CD4-positive, alpha-beta memory T cell (primary cell): ENCODE measurements at regions of chr17 and their contacts with region 1.

Region 1: GRCh38 chr17:30336369-30337171 is 2.7 kb upstream of the TMIGD1 start:
- DNase-seq: peak; percentile 56 to 79 (median 76)
- H3K4me3 ChIP-seq: no peak overlapping the region
- H3K4me3 Mint-ChIP-seq: peak overlapping the region in 2 of 8 donors; percentile 64 to 68
- H3K27ac ChIP-seq: no peak overlapping the region
- H3K27ac Mint-ChIP-seq: peak overlapping the region in 4 of 7 donors; percentile 5 to 80 (median 58)
- H3K4me1 ChIP-seq: peaks cover 24% of the 10 kb centered on the region
- H3K4me1 Mint-ChIP-seq: peaks cover 30 to 47% (median 38%) of the 10 kb centered on the region in 4 donors
- H3K27me3 ChIP-seq: no peaks in the 10 kb centered on the region
- H3K27me3 Mint-ChIP-seq: no peaks in the 10 kb centered on the region

Region 2: GRCh38 chr17:30124273-30124796 is 212.2 kb before region 1 on chr17:
- CTCF ChIA-PET with region 1: interaction called, 107 read pairs
- POLR2A ChIA-PET with region 1: interaction called, 11 read pairs
- intact Hi-C with region 1: loop called (anchors 1 kb)
- DNase-seq: no peak
- H3K4me3 ChIP-seq: no peak overlapping the region
- H3K4me3 Mint-ChIP-seq: no peak overlapping the region
- H3K27ac ChIP-seq: no peak overlapping the region
- H3K27ac Mint-ChIP-seq: peak overlapping the region in 3 of 7 donors; percentile 10 to 83 (median 53)
- H3K4me1 ChIP-seq: peaks cover 20% of the 10 kb centered on the region
- H3K4me1 Mint-ChIP-seq: peaks cover 24 to 47% (median 34%) of the 10 kb centered on the region in 4 donors
- H3K27me3 ChIP-seq: no peaks in the 10 kb centered on the region
- H3K27me3 Mint-ChIP-seq: no peaks in the 10 kb centered on the region

Region 3: DNA sequence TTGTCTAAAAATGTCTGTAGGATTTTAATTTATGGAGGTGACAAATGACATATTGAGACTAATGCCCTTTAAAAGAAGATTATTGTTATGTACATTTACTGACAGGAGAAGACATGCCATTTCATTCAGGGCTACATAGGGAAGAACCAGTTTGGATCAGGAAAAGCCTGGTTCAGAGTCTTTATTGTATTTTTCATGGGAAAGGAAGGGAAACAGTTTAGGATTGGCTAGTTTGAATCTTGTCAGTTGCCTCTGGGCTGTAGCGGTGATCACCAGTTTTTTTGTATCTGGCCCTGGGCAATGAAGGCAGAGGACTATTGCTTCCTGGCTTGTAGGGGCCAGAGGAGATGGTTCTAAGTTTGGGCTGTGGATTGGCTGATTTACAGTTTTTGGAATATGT is 188.2 kb before region 1 on chr17:
- CTCF ChIA-PET with region 1: no interaction called
- POLR2A ChIA-PET with region 1: no interaction called
- intact Hi-C with region 1: no loop called
- DNase-seq: no peak
- H3K4me3 ChIP-seq: no peak overlapping the region
- H3K4me3 Mint-ChIP-seq: no peak overlapping the region
- H3K27ac ChIP-seq: no peak overlapping the region
- H3K27ac Mint-ChIP-seq: peak overlapping the region in 5 of 7 donors; percentile 3 to 67 (median 37)
- H3K4me1 ChIP-seq: no peaks in the 10 kb centered on the region
- H3K4me1 Mint-ChIP-seq: peaks cover 7 to 20% (median 18%) of the 10 kb centered on the region in 4 donors
- H3K27me3 ChIP-seq: no peaks in the 10 kb centered on the region
- H3K27me3 Mint-ChIP-seq: no peaks in the 10 kb centered on the region

Region 4: DNA sequence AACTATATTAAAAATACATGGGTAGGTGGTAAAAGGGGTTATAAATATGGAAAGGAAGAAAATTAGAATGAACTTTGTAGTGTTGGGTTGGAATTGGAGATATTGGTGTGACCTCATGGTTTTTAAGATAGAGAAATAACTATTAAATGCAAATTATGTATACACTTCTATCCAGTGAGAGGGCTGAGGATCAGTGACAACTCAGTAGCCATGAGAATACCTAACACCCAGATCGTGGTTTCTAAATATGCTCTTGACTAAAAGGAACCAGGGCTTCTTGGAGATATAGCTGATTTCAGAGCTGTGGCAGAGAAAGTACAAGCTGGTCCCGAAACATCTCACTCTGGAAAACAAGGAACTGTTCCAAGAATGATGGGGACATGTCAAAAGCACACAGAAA is 145.5 kb before region 1 on chr17:
- CTCF ChIA-PET with region 1: no interaction called
- POLR2A ChIA-PET with region 1: no interaction called
- intact Hi-C with region 1: no loop called
- DNase-seq: no peak
- H3K4me3 ChIP-seq: no peak overlapping the region
- H3K4me3 Mint-ChIP-seq: no peak overlapping the region
- H3K27ac ChIP-seq: no peak overlapping the region
- H3K27ac Mint-ChIP-seq: peak overlapping the region in 1 of 7 donors; percentile 36
- H3K4me1 ChIP-seq: no peaks in the 10 kb centered on the region
- H3K4me1 Mint-ChIP-seq: peaks cover 0 to 2% (median 0%) of the 10 kb centered on the region in 4 donors
- H3K27me3 ChIP-seq: no peaks in the 10 kb centered on the region
- H3K27me3 Mint-ChIP-seq: no peaks in the 10 kb centered on the region

Region 5: DNA sequence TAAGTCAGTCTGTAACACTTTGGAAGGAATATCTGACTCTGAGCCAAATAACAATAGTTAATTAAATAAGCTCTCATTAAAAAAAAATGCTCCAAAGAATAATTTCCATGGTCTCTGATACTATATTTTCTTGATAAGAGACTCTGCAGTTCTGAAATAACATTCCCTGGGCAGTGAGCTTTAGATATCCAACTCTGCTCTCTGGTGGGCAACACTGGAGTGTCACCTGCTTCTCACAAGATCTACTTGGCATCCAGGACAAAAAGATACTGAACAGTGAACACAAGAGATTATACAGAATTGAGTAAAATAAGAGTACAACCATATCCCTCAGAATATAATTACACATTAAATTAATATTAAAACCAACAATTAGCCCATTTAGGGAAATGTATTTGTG is 58.5 kb before region 1 on chr17:
- CTCF ChIA-PET with region 1: interaction called, 28 read pairs
- POLR2A ChIA-PET with region 1: no interaction called
- intact Hi-C with region 1: loop called (anchors 5 kb)
- DNase-seq: peak in 1 of 5 donors; percentile 2
- H3K4me3 ChIP-seq: no peak overlapping the region
- H3K4me3 Mint-ChIP-seq: no peak overlapping the region
- H3K27ac ChIP-seq: no peak overlapping the region
- H3K27ac Mint-ChIP-seq: no peak overlapping the region
- H3K4me1 ChIP-seq: no peaks in the 10 kb centered on the region
- H3K4me1 Mint-ChIP-seq: peaks cover 0 to 11% (median 1%) of the 10 kb centered on the region in 4 donors
- H3K27me3 ChIP-seq: no peaks in the 10 kb centered on the region
- H3K27me3 Mint-ChIP-seq: no peaks in the 10 kb centered on the region

Region 6: GRCh38 chr17:30299000-30299399 is 37.6 kb before region 1 on chr17:
- CTCF ChIA-PET with region 1: interaction called, 224 read pairs
- POLR2A ChIA-PET with region 1: interaction called, 12 read pairs
- intact Hi-C with region 1: loop called (anchors 1 kb)
- DNase-seq: peak in 1 of 5 donors; percentile 13
- H3K4me3 ChIP-seq: no peak overlapping the region
- H3K4me3 Mint-ChIP-seq: no peak overlapping the region
- H3K27ac ChIP-seq: no peak overlapping the region
- H3K27ac Mint-ChIP-seq: no peak overlapping the region
- H3K4me1 ChIP-seq: no peaks in the 10 kb centered on the region
- H3K4me1 Mint-ChIP-seq: peaks cover 1 to 9% (median 8%) of the 10 kb centered on the region in 4 donors
- H3K27me3 ChIP-seq: no peaks in the 10 kb centered on the region
- H3K27me3 Mint-ChIP-seq: no peaks in the 10 kb centered on the region

Region 7: DNA sequence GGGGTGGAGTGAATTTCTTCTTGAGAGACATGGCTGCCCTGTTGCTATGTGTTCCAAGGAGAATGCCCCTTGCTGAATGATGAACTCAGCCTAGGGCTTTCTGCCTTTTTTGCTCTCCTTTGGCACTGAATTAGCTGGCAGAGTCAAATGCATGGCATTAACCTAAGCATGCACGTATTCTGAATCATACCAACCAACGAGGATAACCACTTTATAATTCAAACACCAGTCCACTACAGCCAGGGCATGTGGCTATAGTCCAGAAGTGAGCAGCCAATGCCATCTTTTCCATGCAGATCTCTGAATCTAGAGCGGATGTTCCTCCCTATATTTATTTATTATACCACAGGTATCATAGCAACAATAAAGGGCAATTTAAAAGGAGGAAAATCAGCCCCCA is 18.4 kb before region 1 on chr17:
- CTCF ChIA-PET with region 1: interaction called, 103 read pairs
- POLR2A ChIA-PET with region 1: interaction called, 136 read pairs
- intact Hi-C with region 1: loop called (anchors 1 kb)
- DNase-seq: no peak
- H3K4me3 ChIP-seq: no peak overlapping the region
- H3K4me3 Mint-ChIP-seq: no peak overlapping the region
- H3K27ac ChIP-seq: no peak overlapping the region
- H3K27ac Mint-ChIP-seq: peak overlapping the region in 2 of 7 donors; percentile 42 to 84
- H3K4me1 ChIP-seq: peaks cover 18% of the 10 kb centered on the region
- H3K4me1 Mint-ChIP-seq: peaks cover 10 to 17% (median 14%) of the 10 kb centered on the region in 4 donors
- H3K27me3 ChIP-seq: no peaks in the 10 kb centered on the region
- H3K27me3 Mint-ChIP-seq: no peaks in the 10 kb centered on the region